CD8-positive, alpha-beta T cell (primary cell): ENCODE measurements at regions of chr17 and their contacts with region 1.

Region 1: GRCh38 chr17:28951991-28952975 is 965 bp upstream of the PHF12 start:
- DNase-seq: peak; percentile 87 to 100 (median 94)
- ATAC-seq: peak; percentile 68
- H3K4me3 ChIP-seq: peak overlapping the region; percentile 69 to 77
- H3K4me3 Mint-ChIP-seq: no peak overlapping the region
- H3K27ac ChIP-seq: peak overlapping the region; percentile 85 to 97
- H3K27ac Mint-ChIP-seq: no peak overlapping the region
- H3K4me1 ChIP-seq: peaks cover 28% of the 10 kb centered on the region
- H3K4me1 Mint-ChIP-seq: peaks cover 14% of the 10 kb centered on the region
- H3K27me3 ChIP-seq: no peaks in the 10 kb centered on the region
- H3K27me3 Mint-ChIP-seq: no peaks in the 10 kb centered on the region
- CTCF ChIP-seq: no peak

Region 2: DNA sequence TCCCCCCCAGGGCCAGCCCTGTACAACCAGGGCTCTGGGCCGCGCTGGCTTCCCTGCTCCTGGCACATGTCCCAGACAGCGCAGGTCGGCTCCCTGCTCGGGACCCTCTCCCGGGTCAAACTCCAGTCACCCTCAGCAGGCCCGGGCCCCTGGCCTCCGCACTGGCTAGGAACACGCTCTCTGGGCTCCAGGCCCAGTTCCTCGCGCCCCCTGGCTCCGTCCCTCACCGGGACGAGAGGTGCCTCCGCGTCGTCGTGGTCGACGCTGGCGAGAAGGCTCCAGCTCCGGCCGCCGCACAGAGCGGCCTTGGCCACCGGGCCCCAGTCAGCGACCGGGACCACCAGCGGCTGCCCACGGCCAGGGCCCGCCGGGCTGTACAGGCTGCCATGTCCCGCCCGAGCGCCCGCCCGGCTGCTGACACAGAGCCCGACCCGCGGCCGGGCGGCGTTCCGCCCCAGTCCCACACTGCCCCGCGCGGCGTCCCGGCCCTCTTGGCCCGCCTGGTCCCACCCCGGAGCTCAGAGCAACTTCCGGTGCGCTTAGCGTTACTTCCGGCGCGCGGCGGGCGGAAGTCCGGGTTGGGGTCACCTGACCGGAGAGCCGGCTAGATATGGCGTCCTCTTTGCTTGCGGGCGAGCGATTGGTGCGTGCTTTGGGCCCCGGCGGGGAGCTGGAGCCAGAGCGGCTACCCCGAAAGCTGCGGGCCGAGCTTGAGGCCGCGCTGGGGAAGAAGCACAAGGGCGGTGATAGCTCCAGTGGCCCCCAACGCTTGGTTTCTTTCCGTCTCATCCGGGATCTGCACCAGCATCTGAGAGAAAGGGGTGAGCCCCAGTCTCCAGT is 595.0 kb before region 1 on chr17 and contains the start of gene POLDIP2:
- CTCF ChIA-PET with region 1: no interaction called
- POLR2A ChIA-PET with region 1: interaction called, 3 read pairs
- intact Hi-C with region 1: loop called in 1 of 2 experiments (anchors 2 kb)
- DNase-seq: peak; percentile 91 to 97 (median 96)
- ATAC-seq: peak; percentile 98
- H3K4me3 ChIP-seq: peak within 1 kb of the TSS; percentile 92 to 94
- H3K4me3 Mint-ChIP-seq: peak within 1 kb of the TSS; percentile 94
- H3K27ac ChIP-seq: peak within 1 kb of the TSS; percentile 82 to 93
- H3K27ac Mint-ChIP-seq: peak within 1 kb of the TSS; percentile 96
- H3K4me1 ChIP-seq: peaks cover 25% of the 10 kb centered on the region
- H3K4me1 Mint-ChIP-seq: peaks cover 30% of the 10 kb centered on the region
- H3K27me3 ChIP-seq: no peaks in the 10 kb centered on the region
- H3K27me3 Mint-ChIP-seq: no peaks in the 10 kb centered on the region
- CTCF ChIP-seq: no peak
- total RNA-seq, gene POLDIP2: 26.8 to 27.5 TPM

Region 3: DNA sequence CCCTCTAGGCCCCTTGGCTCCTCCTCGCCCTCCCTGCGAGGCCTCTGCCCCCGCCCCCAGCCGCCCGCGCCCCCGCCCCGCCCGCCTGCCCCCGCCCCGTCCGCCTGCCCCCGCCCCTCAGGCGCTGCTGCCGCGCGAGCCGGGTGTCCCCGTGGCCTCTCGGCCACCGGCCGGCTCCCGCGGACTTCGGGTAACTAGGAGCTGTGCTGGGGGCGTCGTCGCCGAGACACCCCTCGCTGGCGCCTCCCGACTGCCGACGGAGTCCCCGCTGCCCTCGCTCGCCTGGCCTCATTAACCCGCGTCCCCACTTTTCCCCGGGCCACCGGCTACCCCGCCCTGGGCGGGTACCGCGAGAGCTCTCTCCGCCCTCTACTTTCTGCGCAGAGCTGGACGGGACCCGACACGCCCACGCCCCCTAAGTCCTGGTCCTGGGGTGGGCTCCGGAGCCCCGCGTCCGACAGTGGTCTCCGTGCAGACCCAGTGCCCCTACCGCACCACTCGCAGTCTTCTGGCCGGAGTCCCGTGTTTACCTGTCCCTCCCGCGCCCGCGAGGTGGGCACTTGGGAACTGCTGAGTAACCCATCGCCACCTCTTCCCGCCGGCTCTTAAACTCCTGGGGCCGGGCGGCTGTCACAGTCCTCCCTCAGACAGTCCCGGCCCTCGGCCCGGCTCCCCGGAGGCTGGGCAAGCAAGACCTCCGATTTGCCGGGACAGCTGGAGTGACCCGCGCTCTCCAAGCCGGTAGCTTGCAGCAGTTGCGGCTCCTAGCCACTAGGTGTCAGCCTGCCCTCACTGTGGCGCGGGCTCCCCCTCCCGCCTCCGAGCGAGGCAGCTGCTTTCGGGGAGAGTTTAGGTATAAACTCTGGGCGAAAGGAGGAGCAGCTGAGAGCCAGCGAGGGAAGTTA is 225.8 kb before region 1 on chr17 and contains the start of gene TLCD1:
- CTCF ChIA-PET with region 1: interaction called, 38 read pairs
- POLR2A ChIA-PET with region 1: interaction called, 55 read pairs
- intact Hi-C with region 1: loop called (anchors 1 kb)
- DNase-seq: peak; percentile 82 to 94 (median 91)
- ATAC-seq: peak; percentile 43
- H3K4me3 ChIP-seq: peak within 1 kb of the TSS; percentile 88 to 92
- H3K4me3 Mint-ChIP-seq: peak within 1 kb of the TSS; percentile 97
- H3K27ac ChIP-seq: peak within 1 kb of the TSS; percentile 43 to 98
- H3K27ac Mint-ChIP-seq: peak within 1 kb of the TSS; percentile 99
- H3K4me1 ChIP-seq: peaks cover 38% of the 10 kb centered on the region
- H3K4me1 Mint-ChIP-seq: peaks cover 59% of the 10 kb centered on the region
- H3K27me3 ChIP-seq: no peaks in the 10 kb centered on the region
- H3K27me3 Mint-ChIP-seq: no peaks in the 10 kb centered on the region
- CTCF ChIP-seq: peak; percentile 99
- total RNA-seq, gene TLCD1: 0.73 to 1.1 TPM

Region 4: GRCh38 chr17:28849281-28849680 is 103.0 kb before region 1 on chr17:
- CTCF ChIA-PET with region 1: interaction called, 14 read pairs
- POLR2A ChIA-PET with region 1: interaction called, 5 read pairs
- intact Hi-C with region 1: loop called (anchors 1 kb)
- DNase-seq: peak in 3 of 9 experiments; percentile 13 to 32 (median 29)
- ATAC-seq: no peak
- H3K4me3 ChIP-seq: no peak overlapping the region
- H3K4me3 Mint-ChIP-seq: no peak overlapping the region
- H3K27ac ChIP-seq: no peak overlapping the region
- H3K27ac Mint-ChIP-seq: no peak overlapping the region
- H3K4me1 ChIP-seq: peaks cover 3% of the 10 kb centered on the region
- H3K4me1 Mint-ChIP-seq: peaks cover 6% of the 10 kb centered on the region
- H3K27me3 ChIP-seq: no peaks in the 10 kb centered on the region
- H3K27me3 Mint-ChIP-seq: no peaks in the 10 kb centered on the region
- CTCF ChIP-seq: no peak

Region 5: GRCh38 chr17:28916302-28916934 is 35.9 kb before region 1 on chr17:
- CTCF ChIA-PET with region 1: interaction called, 10 read pairs
- POLR2A ChIA-PET with region 1: no interaction called
- intact Hi-C with region 1: loop called (anchors 1 kb)
- DNase-seq: peak in 6 of 9 experiments; percentile 44 to 67 (median 54)
- ATAC-seq: peak; percentile 75
- H3K4me3 ChIP-seq: no peak overlapping the region
- H3K4me3 Mint-ChIP-seq: no peak overlapping the region
- H3K27ac ChIP-seq: no peak overlapping the region
- H3K27ac Mint-ChIP-seq: peak overlapping the region; percentile 65
- H3K4me1 ChIP-seq: no peaks in the 10 kb centered on the region
- H3K4me1 Mint-ChIP-seq: peaks cover 1% of the 10 kb centered on the region
- H3K27me3 ChIP-seq: no peaks in the 10 kb centered on the region
- H3K27me3 Mint-ChIP-seq: no peaks in the 10 kb centered on the region
- CTCF ChIP-seq: peak; percentile 74

Region 6: DNA sequence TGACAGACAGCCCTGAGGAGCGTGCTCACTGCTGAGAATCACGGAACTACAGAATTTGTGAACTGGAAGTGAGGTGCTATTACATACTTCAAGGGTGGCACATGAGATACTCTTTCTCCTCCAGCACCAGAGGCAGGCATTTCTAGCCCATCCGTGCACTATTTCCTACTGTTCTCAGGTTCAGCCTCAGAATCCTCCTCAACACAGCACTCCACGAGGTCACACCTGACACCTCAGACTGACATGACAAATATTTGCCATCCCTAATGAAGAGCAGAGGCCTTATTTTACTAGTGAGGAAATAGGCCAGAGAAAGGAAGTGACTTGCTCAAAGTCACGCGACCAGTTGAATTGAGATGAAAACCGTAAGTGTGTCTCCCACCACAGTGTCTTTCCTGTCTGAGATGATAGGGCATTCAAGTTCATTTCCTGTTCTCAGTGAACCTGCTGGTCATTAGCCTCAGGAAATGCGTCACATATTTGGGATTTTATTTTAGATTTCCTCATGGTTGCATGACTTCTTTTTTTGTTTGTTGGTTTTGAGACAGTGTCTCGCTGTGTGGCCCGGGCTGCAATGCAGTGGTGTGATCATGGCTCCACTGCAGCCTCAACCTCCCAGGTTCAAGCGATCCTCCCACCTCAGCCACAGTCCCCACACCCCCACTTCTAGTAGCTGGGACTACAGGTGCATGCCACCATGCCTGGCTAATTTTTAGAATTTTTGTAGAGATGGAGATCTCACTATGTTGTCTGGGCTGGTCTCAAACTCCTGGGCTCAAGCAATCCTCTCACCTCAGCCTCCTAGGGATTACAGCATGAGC is 30.1 kb after region 1 on chr17:
- CTCF ChIA-PET with region 1: interaction called, 13 read pairs
- POLR2A ChIA-PET with region 1: no interaction called
- intact Hi-C with region 1: loop called in 1 of 2 experiments (anchors 1 kb)
- DNase-seq: peak; percentile 21 to 97 (median 55)
- ATAC-seq: peak; percentile 88
- H3K4me3 ChIP-seq: no peak overlapping the region
- H3K4me3 Mint-ChIP-seq: peak overlapping the region; percentile 23
- H3K27ac ChIP-seq: peak overlapping the region; percentile 49 to 96
- H3K27ac Mint-ChIP-seq: peak overlapping the region; percentile 94
- H3K4me1 ChIP-seq: peaks cover 26% of the 10 kb centered on the region
- H3K4me1 Mint-ChIP-seq: peaks cover 23% of the 10 kb centered on the region
- H3K27me3 ChIP-seq: no peaks in the 10 kb centered on the region
- H3K27me3 Mint-ChIP-seq: no peaks in the 10 kb centered on the region
- CTCF ChIP-seq: no peak

Region 7: DNA sequence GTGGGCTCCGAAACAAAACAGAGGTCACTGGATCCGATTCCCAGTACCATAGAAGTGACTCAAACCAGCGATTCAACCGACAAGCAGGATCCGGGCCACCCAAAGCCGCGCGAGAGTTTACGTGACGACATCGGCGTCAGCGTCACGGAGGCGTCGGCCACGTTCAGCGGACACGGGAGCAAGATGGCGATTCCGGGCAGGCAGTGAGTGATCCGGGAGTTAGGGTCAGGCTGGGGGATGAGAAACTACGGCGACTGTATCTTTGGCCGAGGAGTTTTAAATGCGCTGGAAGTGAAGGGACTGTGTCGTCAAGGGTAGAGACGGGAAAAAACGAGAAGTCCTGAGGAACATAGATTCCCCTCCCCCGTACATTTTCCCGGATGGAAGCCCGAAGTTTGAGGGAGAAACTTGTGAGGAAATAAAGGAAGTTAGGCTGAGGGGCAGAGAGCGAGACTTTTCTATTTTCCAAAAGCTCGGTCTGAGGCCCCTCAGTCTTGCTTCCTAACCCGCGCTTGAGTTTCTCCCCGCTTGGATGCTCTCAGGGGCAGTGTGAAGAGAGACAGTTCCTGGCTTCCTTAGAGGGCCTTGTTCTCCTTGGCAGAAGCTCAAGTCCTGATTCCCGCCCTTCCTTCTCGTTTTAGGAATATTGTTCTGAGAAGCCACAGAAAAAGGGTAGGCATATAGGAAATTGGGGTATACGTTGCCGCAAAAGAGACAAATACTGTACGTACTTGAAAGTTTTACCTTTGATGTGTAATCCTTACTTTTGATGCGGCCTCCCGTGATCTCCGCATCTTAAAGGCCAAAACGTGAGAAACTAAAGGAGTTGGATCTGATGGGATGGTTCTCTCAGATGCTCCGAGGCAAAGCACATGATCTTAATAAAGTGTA is 1164.6 kb after region 1 on chr17 and contains the start of gene NSRP1:
- CTCF ChIA-PET with region 1: no interaction called
- POLR2A ChIA-PET with region 1: no interaction called
- intact Hi-C with region 1: loop called in 1 of 2 experiments (anchors 5 kb)
- DNase-seq: peak; percentile 83 to 96 (median 92)
- ATAC-seq: peak; percentile 97
- H3K4me3 ChIP-seq: peak within 1 kb of the TSS; percentile 66 to 96
- H3K4me3 Mint-ChIP-seq: peak within 1 kb of the TSS; percentile 100
- H3K27ac ChIP-seq: peak within 1 kb of the TSS; percentile 95 to 99
- H3K27ac Mint-ChIP-seq: peak within 1 kb of the TSS; percentile 100
- H3K4me1 ChIP-seq: peaks cover 16% of the 10 kb centered on the region
- H3K4me1 Mint-ChIP-seq: peaks cover 41% of the 10 kb centered on the region
- H3K27me3 ChIP-seq: no peaks in the 10 kb centered on the region
- H3K27me3 Mint-ChIP-seq: no peaks in the 10 kb centered on the region
- CTCF ChIP-seq: no peak
- total RNA-seq, gene NSRP1: 22.4 to 23.1 TPM